Mammary epithelial cell (primary cell): ENCODE measurements at regions of chr22 and their contacts with region 1.

Region 1: GRCh38 chr22:32674925-32675825 is 126.3 kb upstream of the TIMP3 start:
- DNase-seq: no peak
- H3K4me3 ChIP-seq: no peak overlapping the region
- H3K27ac ChIP-seq: no peak overlapping the region
- H3K4me1 ChIP-seq: no peaks in the 10 kb centered on the region
- H3K27me3 ChIP-seq: no peaks in the 10 kb centered on the region
- CTCF ChIP-seq: no peak

Region 2: GRCh38 chr22:32708830-32709229 is 33.7 kb after region 1 on chr22:
- CTCF ChIA-PET with region 1: no interaction called
- dilution Hi-C with region 1: loop called (anchors 5 kb)
- in situ Hi-C with region 1: no loop called
- intact Hi-C with region 1: no loop called
- DNase-seq: peak; percentile 61
- H3K4me3 ChIP-seq: no peak overlapping the region
- H3K27ac ChIP-seq: peak overlapping the region; percentile 11
- H3K4me1 ChIP-seq: peaks cover 26% of the 10 kb centered on the region
- H3K27me3 ChIP-seq: no peaks in the 10 kb centered on the region
- CTCF ChIP-seq: no peak